ENCODE measurements at regions of chr4 and their contacts with region 1.

Region 1: DNA sequence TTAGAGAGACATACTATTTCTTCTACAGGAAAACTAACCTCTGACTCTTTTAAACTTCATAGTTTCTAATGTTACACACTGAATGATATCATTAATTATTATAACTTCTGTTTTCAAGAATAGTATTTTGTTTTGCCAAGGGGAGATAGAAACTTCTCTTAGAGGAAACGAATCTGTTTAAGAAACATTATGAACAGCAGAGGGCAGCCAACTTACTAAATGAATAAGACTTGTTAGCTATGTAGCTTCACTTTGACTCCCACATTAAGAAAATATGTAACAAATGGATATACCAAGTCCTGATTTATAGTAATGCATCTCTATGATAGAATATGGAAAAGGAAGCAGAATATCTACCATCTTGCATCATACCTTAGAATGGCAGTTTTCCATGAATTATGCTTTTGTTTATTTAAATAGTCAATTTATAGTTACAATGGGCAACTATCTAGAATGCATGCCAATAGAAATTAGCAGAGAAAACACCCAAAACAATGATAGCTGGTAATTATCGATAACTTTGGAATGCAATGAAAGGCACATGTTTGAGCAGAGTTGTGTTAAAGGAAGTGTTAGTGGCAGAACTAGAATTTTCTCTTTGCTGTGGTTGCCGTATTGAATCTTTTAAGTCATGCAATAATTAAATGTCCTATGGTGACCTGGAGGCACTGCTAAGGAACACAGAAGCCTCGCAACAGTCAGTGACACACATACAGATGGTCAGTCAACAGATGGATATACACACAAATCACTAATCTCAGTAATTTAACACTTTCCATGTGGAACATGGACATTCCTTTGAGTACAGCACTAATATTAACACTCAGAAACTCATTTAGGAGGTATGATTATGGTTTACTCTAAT is 105.7 kb upstream of the PDLIM3 start:
- DNase-seq: peak; percentile 61
- CTCF ChIP-seq: no peak

Region 2: GRCh38 chr4:186015212-186015785 is 374.3 kb after region 1 on chr4:
- in situ Hi-C with region 1: loop called (anchors 10 kb)
- DNase-seq: no peak
- CTCF ChIP-seq: no peak